A673 (cell line): ENCODE measurements at regions of chr20 and their contacts with region 1.

Region 1: GRCh38 chr20:44609511-44610312 is 27.3 kb downstream of the PKIG start:
- DNase-seq: peak; percentile 85
- H3K4me3 ChIP-seq: no peak overlapping the region
- H3K27ac ChIP-seq: no peak overlapping the region
- H3K4me1 ChIP-seq: peaks cover 5% of the 10 kb centered on the region
- H3K27me3 ChIP-seq: no peaks in the 10 kb centered on the region
- CTCF ChIP-seq: peak; percentile 98

Region 2: DNA sequence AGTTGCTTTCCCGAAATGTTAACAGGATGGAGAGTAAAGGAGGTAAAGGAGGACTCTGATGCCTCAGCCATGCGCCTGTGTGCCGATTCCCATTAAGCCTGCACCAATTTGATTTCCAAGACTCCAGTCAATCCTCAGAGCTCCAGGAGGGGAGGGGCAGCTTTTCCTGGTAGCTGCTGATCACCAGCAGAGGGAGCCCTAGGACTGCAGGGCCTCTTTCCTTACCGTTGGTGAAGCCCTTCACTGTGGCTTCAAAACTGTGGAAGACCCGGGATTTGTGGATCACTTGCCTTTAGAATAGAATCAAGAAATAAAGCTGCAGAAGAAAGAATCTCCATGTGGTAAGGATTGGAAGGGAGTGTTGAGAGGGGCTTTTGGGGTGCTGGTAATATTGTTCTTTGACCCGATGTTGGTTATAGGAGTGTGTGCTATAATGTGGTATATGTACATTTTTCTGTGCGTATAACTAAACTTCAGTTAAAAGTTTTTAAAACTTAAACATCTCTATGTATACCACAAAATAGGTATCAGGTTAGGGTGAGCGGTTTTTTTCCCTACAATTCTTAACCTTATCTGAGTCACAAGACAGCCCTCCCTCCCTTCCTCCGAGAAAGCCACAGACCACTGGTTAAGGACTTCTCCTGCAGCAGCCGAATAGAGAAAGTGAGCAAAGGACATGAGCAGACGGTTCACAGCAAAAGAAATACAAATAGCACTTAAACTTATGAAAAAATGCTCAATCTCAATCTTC is 392.2 kb before region 1 on chr20:
- CTCF ChIA-PET with region 1: no interaction called
- POLR2A ChIA-PET with region 1: no interaction called
- intact Hi-C with region 1: loop called (anchors 2 kb)
- DNase-seq: peak; percentile 74
- H3K4me3 ChIP-seq: no peak overlapping the region
- H3K27ac ChIP-seq: no peak overlapping the region
- H3K4me1 ChIP-seq: no peaks in the 10 kb centered on the region
- H3K27me3 ChIP-seq: no peaks in the 10 kb centered on the region
- CTCF ChIP-seq: peak; percentile 86

Region 3: GRCh38 chr20:44467289-44467883 is 142.3 kb before region 1 on chr20:
- CTCF ChIA-PET with region 1: interaction called, 3 read pairs
- POLR2A ChIA-PET with region 1: no interaction called
- intact Hi-C with region 1: loop called (anchors 5 kb)
- DNase-seq: no peak
- H3K4me3 ChIP-seq: no peak overlapping the region
- H3K27ac ChIP-seq: no peak overlapping the region
- H3K4me1 ChIP-seq: no peaks in the 10 kb centered on the region
- H3K27me3 ChIP-seq: no peaks in the 10 kb centered on the region
- CTCF ChIP-seq: no peak

Region 4: GRCh38 chr20:44572541-44573500 is 36.9 kb before region 1 on chr20:
- CTCF ChIA-PET with region 1: no interaction called
- POLR2A ChIA-PET with region 1: no interaction called
- intact Hi-C with region 1: no loop called
- DNase-seq: peak; percentile 23
- H3K4me3 ChIP-seq: no peak overlapping the region
- H3K27ac ChIP-seq: peak overlapping the region; percentile 57
- H3K4me1 ChIP-seq: peaks cover 35% of the 10 kb centered on the region
- H3K27me3 ChIP-seq: no peaks in the 10 kb centered on the region
- CTCF ChIP-seq: no peak

Region 5: DNA sequence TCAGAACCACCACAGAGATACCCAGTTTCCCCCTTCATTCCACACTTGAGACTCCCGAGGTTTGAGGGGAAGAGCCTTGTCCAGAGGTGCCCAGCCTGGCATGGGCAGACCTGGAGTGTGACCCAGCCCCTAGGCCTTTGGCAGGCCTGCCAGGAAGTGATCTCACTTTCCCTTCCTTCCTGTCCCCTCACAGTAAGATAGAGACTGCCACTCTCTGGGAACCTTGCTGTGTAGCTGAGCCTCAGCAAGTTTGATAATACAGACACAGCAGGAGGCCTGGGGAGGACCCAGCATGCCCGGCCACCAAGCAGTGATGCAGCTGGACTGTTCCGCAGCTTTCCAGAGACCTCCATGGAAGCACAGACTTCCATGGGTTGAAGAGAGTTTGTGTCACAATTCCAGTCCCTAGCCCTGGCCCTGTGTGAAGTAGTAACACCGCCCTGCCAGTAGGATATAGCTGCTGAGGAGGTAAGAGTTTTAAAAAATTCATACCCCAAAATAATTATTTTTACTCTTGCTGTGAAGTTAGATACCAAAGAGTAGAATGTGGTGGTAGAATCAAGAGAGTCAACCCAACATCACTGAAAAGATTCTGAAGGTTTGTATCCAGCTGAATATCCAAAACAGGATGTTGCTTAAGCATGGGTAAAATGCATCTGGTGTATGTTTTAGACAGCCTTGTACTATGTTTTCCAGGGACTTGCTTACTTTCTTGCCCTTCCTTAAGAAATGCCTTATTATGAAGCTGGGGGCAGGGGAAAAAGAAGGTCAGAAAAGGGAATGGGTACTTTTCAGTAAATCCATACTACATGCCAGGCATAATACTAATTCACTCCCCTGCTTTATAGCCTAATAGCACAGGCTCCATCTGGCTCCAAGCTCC is 11.0 kb before region 1 on chr20:
- CTCF ChIA-PET with region 1: interaction called, 3 read pairs
- POLR2A ChIA-PET with region 1: interaction called, 11 read pairs
- intact Hi-C with region 1: no loop called
- DNase-seq: peak; percentile 92
- H3K4me3 ChIP-seq: no peak overlapping the region
- H3K27ac ChIP-seq: peak overlapping the region; percentile 81
- H3K4me1 ChIP-seq: peaks cover 47% of the 10 kb centered on the region
- H3K27me3 ChIP-seq: no peaks in the 10 kb centered on the region
- CTCF ChIP-seq: peak; percentile 36; the same call in 1 of the 2 replicates

Region 6: GRCh38 chr20:44642203-44643153 is 32.8 kb after region 1 on chr20:
- CTCF ChIA-PET with region 1: no interaction called
- POLR2A ChIA-PET with region 1: no interaction called
- intact Hi-C with region 1: no loop called
- DNase-seq: peak; percentile 86
- H3K4me3 ChIP-seq: peak overlapping the region; percentile 21
- H3K27ac ChIP-seq: peak overlapping the region; percentile 81
- H3K4me1 ChIP-seq: peaks cover 44% of the 10 kb centered on the region
- H3K27me3 ChIP-seq: no peaks in the 10 kb centered on the region
- CTCF ChIP-seq: 0 out of 2 replicates have a peak, but pooled peaks have one; percentile 8